Cardiac septum (tissue), 1 donor: ENCODE measurements at regions of chr15 and their contacts with region 1.

Region 1: DNA sequence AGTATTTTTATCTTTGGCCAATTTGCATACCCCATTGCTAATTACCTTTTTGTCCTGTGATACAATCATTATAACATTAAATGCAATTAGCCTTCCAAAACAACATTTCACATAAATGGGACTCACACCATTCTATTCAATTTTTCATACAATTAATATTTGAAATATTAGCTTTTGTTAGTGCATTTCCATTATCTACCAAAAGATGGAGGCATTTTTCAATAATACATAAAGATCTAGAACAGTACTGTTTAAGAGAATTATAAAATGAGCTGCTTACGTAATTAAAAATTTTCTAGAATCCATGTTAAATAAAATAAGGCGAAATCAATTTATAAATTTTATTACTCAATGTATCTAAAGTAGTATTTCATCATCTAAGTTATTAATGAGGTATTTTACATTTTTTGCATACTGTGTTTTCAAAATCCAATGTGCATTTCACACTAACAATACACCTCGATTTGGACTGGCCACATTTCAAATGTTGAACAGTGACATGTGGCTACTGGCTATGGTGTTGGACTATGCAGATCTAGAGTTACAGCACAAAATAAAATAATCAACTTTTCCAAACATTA is 74.3 kb downstream of the TJP1 start:
- DNase-seq: no peak

Region 2: DNA sequence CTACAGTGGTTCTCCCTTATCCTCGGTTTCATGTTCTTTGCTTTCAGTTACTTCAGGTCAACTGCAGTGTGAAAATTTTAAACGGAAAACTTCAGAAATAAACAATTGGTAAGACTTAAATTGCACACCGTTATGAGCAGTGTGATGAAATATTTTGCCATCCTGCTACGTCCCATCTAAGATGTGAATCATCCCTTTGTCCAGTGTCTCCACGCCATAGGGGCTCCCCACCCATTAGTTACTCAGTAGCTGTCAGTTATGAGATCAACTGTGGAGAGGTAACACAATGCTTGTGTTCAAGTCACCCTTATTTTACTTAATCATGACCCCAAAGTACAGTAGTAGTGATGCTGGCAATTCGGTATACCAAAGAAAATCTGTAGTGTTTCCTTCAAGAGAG is 27.0 kb after region 1 on chr15:
- intact Hi-C with region 1: no loop called
- DNase-seq: no peak

Region 3: DNA sequence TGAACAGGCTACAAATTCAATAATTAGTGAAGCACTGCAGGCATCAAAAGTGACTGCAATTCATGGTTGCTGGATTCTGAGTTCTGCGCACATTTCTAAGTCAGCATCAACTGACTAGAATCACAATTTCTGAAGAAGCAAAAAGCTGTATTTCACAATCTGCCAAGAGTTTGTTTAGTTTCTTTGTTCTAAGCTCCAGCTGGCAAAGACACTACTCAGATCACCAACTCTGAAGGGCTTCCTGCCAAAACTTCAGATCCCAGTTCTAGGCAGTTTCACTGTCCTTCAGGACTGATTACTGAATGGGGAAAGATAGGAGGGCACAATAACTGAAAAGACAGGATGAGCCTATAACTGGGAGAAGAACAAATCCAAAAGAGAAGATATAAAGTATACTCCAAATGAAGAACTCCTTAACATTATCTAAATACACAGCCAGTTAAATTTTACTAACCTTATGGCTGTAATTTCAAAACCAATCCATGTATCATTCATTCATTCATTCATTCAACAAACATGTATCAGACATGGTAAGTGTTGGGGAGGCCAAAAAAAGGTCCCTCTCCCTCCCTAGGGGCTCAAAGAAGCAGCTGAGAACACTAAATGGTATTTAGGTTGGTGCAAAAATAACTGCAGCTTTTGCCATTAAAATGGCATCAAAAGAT is 57.2 kb after region 1 on chr15:
- intact Hi-C with region 1: loop called (anchors 5 kb)
- DNase-seq: no peak